ENCODE measurements at regions of chr7 and their contacts with region 1.

Region 1: DNA sequence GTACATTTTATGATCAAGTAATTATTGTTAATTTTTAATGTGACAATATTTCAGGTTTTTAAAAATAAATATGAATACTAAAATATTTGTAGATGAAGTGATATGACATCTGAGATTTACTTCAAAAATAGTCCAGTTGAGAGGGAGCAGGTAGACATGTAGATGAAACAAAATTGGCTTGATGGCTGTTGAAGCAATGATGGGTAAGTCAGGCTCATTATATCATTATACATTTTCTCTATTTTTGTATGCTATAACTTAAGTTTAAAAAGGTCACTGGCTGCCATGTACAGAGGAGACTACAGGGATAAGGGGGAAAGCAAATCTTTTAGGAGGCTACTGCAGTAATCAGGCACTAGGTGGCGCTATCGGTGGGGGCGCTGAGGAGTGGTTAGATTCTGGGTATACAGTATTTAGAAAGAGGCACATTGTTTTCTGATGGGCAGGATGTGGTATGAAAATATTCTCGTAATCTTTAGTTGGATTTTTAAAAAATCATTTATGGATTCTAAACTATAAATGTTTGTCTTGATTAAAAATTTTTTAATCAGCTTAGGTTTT is 189.8 kb upstream of the IMMP2L start:
- DNase-seq: peak; percentile 57
- CTCF ChIP-seq: peak; percentile 73

Region 2: DNA sequence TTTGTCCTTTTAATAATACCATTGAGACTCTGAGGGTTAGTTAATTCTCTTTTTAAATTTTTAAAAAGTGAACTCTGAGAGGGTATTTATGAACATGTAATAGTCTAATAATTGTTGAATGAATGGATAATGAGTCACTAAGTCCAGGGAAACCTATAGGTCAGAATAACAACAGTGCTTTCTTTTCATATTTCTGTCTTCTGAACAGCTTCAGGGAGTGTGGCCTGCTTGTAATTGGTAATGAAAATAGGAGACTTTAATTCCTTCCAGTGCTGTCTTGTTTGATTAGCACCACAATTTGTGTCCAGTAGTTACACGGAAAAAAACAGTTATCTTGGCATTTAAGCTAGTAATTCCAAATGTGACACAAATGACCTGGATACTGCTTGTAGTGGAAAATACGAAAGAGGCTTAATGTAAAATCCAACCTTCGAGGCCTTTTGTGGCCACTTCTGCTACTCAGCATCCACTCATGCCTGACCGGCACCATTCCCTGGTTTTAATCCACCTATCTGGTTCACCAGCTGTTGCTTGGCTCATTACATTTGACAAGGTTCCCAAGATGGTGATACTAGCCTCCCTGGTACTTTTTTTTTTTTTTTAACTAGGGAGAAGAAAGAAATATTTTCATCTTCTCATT is 40.6 kb before region 1 on chr7:
- CTCF ChIA-PET with region 1: no interaction called
- POLR2A ChIA-PET with region 1: no interaction called
- DNase-seq: no peak
- CTCF ChIP-seq: no peak

Region 3: GRCh38 chr7:111741811-111742240 is 10.3 kb before region 1 on chr7:
- CTCF ChIA-PET with region 1: interaction called, 37 read pairs
- POLR2A ChIA-PET with region 1: no interaction called
- DNase-seq: peak; percentile 66
- CTCF ChIP-seq: peak; percentile 66

Region 4: GRCh38 chr7:111762211-111762610 is 10.1 kb after region 1 on chr7:
- CTCF ChIA-PET with region 1: interaction called, 11 read pairs
- POLR2A ChIA-PET with region 1: no interaction called
- DNase-seq: no peak
- CTCF ChIP-seq: no peak

Region 5: GRCh38 chr7:111855161-111855856 is 103.2 kb after region 1 on chr7:
- CTCF ChIA-PET with region 1: interaction called, 10 read pairs
- POLR2A ChIA-PET with region 1: no interaction called
- DNase-seq: peak; percentile 26
- CTCF ChIP-seq: peak; percentile 44

Region 6: DNA sequence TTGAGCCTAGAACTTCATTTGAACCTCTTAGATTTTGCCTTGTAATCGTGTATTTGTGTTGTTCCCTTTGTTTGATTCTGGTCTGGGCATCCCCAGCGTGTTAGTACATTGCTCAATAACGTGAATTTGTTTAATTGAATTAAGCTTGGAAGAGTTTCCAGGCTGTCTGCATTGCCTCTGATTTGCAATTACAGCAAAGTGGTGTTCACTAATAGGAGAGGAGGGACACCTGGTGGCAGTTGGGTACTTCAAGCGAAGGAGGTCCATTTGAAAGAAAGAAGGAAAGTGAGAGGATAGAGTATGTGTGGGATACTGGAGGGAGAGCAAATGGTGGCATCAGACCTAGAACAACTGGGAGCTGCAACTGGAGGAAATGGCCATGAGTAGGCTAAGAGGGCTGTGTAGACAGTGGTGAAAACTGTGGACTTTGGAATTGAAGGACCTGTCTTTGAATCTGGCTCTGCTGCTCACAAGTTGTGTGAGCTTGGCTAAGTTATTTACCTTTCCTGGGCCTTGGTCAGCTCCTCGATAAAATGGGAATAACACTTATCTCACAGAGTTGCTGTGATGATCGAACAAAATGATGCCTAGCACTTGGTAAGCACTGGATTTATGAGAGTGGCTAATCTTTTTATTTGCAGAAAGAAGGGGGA is 743.8 kb after region 1 on chr7:
- CTCF ChIA-PET with region 1: interaction called, 36 read pairs
- POLR2A ChIA-PET with region 1: no interaction called
- DNase-seq: peak; percentile 28
- CTCF ChIP-seq: peak; percentile 63

Region 7: DNA sequence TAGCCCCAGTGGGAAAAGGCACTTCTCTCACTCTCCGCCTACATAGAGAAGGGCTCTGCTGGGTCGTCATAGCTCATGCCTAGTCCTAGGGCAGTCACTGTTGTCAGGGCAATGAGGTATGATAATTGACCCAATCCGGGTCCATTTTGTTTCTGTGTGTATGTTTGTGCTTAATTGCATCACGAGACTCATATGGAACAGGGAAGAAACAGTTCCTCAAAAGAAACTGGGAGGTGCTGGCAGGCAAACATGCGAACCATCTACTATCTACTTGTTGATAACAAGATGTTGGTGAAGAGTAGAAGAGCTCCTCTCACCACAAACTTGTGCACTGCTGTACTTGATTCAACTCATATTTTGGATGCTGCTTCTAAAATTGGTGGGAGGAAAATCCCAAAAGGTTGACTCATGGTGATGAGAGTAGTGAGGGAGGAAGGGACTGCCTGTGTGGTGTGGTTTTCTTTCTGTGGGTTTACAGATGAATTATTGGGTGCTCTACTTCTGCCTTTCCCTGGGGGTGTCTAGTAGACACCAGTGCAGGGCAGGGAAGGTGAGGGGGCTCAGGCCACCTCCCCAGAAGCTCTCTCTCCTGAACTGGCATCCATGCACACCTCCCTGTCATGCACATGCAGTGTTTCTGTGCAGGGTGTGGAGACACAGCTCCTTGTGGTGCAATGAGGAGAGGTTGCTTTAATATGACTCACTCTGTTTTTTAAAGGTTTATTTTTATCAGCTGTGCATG is 758.1 kb after region 1 on chr7:
- CTCF ChIA-PET with region 1: interaction called, 10 read pairs
- POLR2A ChIA-PET with region 1: no interaction called
- DNase-seq: peak; percentile 32
- CTCF ChIP-seq: no peak